PC-9 (cell line): ENCODE measurements at regions of chr11 and their contacts with region 1.

Region 1: DNA sequence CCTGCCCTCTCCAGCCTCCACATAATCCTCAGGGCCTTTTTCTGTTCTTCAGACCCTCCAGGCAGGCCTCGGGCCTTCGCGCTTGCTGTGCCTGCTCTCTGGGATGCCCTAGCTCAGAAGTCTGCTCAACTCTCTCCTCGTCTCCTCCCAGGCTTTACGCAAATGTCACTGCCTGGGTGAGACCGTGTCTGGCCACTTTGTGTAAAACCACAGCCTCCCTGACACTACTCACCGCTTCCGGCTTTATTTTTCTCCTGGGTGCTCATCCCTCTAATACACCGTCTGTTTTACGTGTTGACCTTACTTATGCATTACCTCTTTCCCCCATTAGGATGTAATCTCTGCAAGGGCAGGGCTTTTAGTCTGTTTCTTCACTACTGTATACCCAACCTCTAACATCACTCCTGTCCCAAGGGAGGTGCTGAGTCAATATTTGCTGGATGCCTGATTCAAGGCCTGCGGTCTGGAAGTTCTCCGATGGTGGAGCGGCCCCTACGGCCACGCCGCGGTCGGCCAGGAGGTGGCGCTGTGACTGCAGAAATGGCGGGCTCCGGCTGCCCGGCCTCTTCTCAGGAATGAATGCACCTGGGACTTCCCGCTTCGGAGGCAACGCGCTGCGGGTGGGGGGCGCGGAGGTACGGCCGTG is 58.2 kb upstream of the THY1 start:
- DNase-seq: peak; percentile 86 to 90
- H3K4me3 ChIP-seq: no peak overlapping the region
- H3K27ac ChIP-seq: no peak overlapping the region
- H3K4me1 ChIP-seq: peaks cover 6% of the 10 kb centered on the region
- H3K27me3 ChIP-seq: 0 out of 2 replicates have a peak, but pooled peaks cover 7% of the 10 kb centered on the region
- CTCF ChIP-seq: peak; percentile 100

Region 2: GRCh38 chr11:119641983-119642745 is 161.0 kb after region 1 on chr11:
- CTCF ChIA-PET with region 1: no interaction called
- POLR2A ChIA-PET with region 1: no interaction called
- intact Hi-C with region 1: loop called (anchors 2 kb)
- DNase-seq: peak in 1 of 2 experiments; percentile 8
- H3K4me3 ChIP-seq: no peak overlapping the region
- H3K27ac ChIP-seq: no peak overlapping the region
- H3K4me1 ChIP-seq: no peaks in the 10 kb centered on the region
- H3K27me3 ChIP-seq: 0 out of 2 replicates have a peak, but pooled peaks cover 6% of the 10 kb centered on the region
- CTCF ChIP-seq: peak; percentile 90

Region 3: GRCh38 chr11:119728651-119729580 is 247.8 kb after region 1 on chr11 and contains the start of gene NECTIN1:
- CTCF ChIA-PET with region 1: interaction called, 3 read pairs
- POLR2A ChIA-PET with region 1: no interaction called
- intact Hi-C with region 1: loop called (anchors 2 kb)
- DNase-seq: peak; percentile 80 to 82
- H3K4me3 ChIP-seq: peak within 1 kb of the TSS; percentile 93
- H3K27ac ChIP-seq: no peak within 1 kb of the TSS
- H3K4me1 ChIP-seq: peaks cover 21% of the 10 kb centered on the region
- H3K27me3 ChIP-seq: 0 out of 2 replicates have a peak, but pooled peaks cover 4% of the 10 kb centered on the region
- CTCF ChIP-seq: peak; percentile 99
- total RNA-seq, gene NECTIN1: 17.6 and 21.5 TPM in 2 replicates

Region 4: GRCh38 chr11:120108154-120108865 is 627.2 kb after region 1 on chr11:
- CTCF ChIA-PET with region 1: interaction called, 4 read pairs
- POLR2A ChIA-PET with region 1: no interaction called
- intact Hi-C with region 1: loop called (anchors 1 kb)
- DNase-seq: peak; percentile 61 to 70
- H3K4me3 ChIP-seq: no peak overlapping the region
- H3K27ac ChIP-seq: no peak overlapping the region
- H3K4me1 ChIP-seq: no peaks in the 10 kb centered on the region
- H3K27me3 ChIP-seq: peaks cover 28% of the 10 kb centered on the region
- CTCF ChIP-seq: peak; percentile 100